ENCODE measurements at regions of chr15 and their contacts with region 1.

Region 1: DNA sequence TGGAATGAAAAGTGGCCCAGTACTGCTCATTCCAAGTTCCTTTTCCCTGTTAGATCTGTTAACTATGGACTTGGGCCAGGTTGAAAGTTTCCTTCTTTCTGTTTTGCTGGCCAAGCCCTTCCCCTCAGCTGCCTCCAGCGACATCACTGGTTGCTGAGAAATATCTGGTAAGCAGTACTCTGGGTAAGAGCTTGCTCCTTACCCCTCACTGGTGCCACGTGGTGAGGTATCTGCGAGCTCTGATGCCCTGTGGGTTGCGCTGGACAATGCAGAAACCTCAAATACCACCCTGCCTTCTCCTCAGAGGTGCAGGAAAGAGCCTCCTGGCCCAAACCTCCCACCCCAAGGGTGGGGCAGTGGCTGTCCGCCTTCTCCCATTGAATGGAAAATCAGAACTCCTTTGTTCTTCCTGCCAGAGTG is 42.9 kb upstream of the APH1B start:
- DNase-seq: peak; percentile 24 to 46
- ATAC-seq: peak; percentile 62 to 64
- H3K4me3 ChIP-seq: no peak overlapping the region
- H3K27ac ChIP-seq: peak overlapping the region; percentile 42 to 54 (median 45)
- H3K4me1 ChIP-seq: peaks cover 17 to 36% of the 10 kb centered on the region in 2 donors
- H3K27me3 ChIP-seq: no peaks in the 10 kb centered on the region
- CTCF ChIP-seq: no peak
- POLR2A ChIP-seq: no peak

Region 2: GRCh38 chr15:63006032-63006878 is 228.2 kb before region 1 on chr15:
- in situ Hi-C with region 1: no loop called
- intact Hi-C with region 1: no loop called
- DNase-seq: no peak
- ATAC-seq: no peak
- H3K4me3 ChIP-seq: no peak overlapping the region
- H3K27ac ChIP-seq: no peak overlapping the region
- H3K4me1 ChIP-seq: peaks cover 0 to 3% of the 10 kb centered on the region in 2 donors
- H3K27me3 ChIP-seq: no peaks in the 10 kb centered on the region
- CTCF ChIP-seq: no peak
- POLR2A ChIP-seq: no peak

Region 3: GRCh38 chr15:63212050-63213004 is 22.1 kb before region 1 on chr15:
- in situ Hi-C with region 1: no loop called
- intact Hi-C with region 1: loop called (anchors 2 kb)
- DNase-seq: no peak
- ATAC-seq: peak in 1 of 2 donors; percentile 64
- H3K4me3 ChIP-seq: no peak overlapping the region
- H3K27ac ChIP-seq: peak overlapping the region in 2 of 4 donors; percentile 36 to 39
- H3K4me1 ChIP-seq: peaks cover 0 to 13% of the 10 kb centered on the region in 2 donors
- H3K27me3 ChIP-seq: no peaks in the 10 kb centered on the region
- CTCF ChIP-seq: no peak
- POLR2A ChIP-seq: no peak

Region 4: GRCh38 chr15:63291507-63291906 is 57.0 kb after region 1 on chr15:
- in situ Hi-C with region 1: no loop called
- intact Hi-C with region 1: no loop called
- DNase-seq: no peak
- ATAC-seq: no peak
- H3K4me3 ChIP-seq: no peak overlapping the region
- H3K27ac ChIP-seq: peak overlapping the region in 1 of 4 donors; percentile 23
- H3K4me1 ChIP-seq: peaks cover 0 to 5% of the 10 kb centered on the region in 2 donors
- H3K27me3 ChIP-seq: no peaks in the 10 kb centered on the region
- CTCF ChIP-seq: no peak
- POLR2A ChIP-seq: no peak

Region 5: GRCh38 chr15:64562003-64562640 is 1327.7 kb after region 1 on chr15:
- in situ Hi-C with region 1: no loop called
- intact Hi-C with region 1: loop called (anchors 5 kb)
- DNase-seq: no peak
- ATAC-seq: no peak
- H3K4me3 ChIP-seq: no peak overlapping the region
- H3K27ac ChIP-seq: no peak overlapping the region
- H3K4me1 ChIP-seq: peaks cover 14 to 26% of the 10 kb centered on the region in 2 donors
- H3K27me3 ChIP-seq: no peaks in the 10 kb centered on the region
- CTCF ChIP-seq: no peak
- POLR2A ChIP-seq: no peak